ENCODE measurements at regions of chr6 and their contacts with region 1.

Region 1: DNA sequence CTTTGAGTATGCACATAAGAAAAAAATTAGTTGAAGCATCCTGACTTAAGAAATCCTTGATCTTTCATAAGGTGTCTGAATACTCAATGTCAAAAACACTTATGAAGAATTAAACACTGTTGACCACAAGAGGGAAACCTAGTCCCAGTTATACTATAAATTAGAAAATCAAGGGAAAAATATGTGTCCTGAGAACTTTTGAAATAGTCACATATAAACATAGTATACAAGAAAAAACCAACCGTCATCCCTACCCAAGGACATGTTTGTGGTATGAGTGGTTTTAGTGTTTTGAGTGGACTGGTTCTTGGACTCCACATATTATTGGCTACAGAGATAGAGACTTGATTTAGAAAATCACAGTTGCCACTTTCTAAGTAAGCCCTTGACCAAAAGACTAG is 7.6 kb upstream of the HLA-DRA start:
- DNase-seq: peak in 4 of 5 donors; percentile 28 to 41 (median 36)
- H3K4me3 ChIP-seq: no peak overlapping the region
- H3K4me3 Mint-ChIP-seq: no peak overlapping the region
- H3K27ac ChIP-seq: no peak overlapping the region
- H3K27ac Mint-ChIP-seq: no peak overlapping the region
- H3K4me1 ChIP-seq: no peaks in the 10 kb centered on the region
- H3K4me1 Mint-ChIP-seq: no peaks in the 10 kb centered on the region
- H3K27me3 ChIP-seq: peaks cover 4% of the 10 kb centered on the region
- H3K27me3 Mint-ChIP-seq: peaks cover 5 to 11% of the 10 kb centered on the region in 2 donors

Region 2: GRCh38 chr6:32290886-32291450 is 141.1 kb before region 1 on chr6:
- CTCF ChIA-PET with region 1: no interaction called
- POLR2A ChIA-PET with region 1: no interaction called
- intact Hi-C with region 1: no loop called
- DNase-seq: no peak
- H3K4me3 ChIP-seq: no peak overlapping the region
- H3K4me3 Mint-ChIP-seq: no peak overlapping the region
- H3K27ac ChIP-seq: no peak overlapping the region
- H3K27ac Mint-ChIP-seq: no peak overlapping the region
- H3K4me1 ChIP-seq: no peaks in the 10 kb centered on the region
- H3K4me1 Mint-ChIP-seq: no peaks in the 10 kb centered on the region
- H3K27me3 ChIP-seq: no peaks in the 10 kb centered on the region
- H3K27me3 Mint-ChIP-seq: peaks cover 28 to 33% of the 10 kb centered on the region in 2 donors

Region 3: DNA sequence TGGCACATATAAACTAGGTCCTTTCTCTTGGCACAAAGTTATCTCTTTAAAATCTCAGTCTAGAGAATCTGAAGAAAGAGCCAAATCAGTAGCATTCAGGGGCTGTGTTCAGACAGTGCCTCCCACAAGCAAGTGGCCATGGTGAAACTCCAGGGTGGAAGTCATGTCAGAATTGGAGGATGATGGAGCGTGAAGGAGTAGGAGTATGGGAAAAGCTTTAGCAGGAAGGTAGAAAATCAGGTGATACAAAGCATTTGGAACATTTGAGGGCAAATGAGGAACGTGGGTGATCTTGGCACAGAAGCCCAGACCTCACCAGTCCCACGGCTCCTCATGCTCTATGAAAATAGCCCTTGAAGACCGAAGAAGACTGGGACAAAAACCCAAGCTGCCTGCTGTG is 237.2 kb after region 1 on chr6:
- CTCF ChIA-PET with region 1: no interaction called
- POLR2A ChIA-PET with region 1: no interaction called
- intact Hi-C with region 1: no loop called
- DNase-seq: no peak
- H3K4me3 ChIP-seq: no peak overlapping the region
- H3K4me3 Mint-ChIP-seq: no peak overlapping the region
- H3K27ac ChIP-seq: no peak overlapping the region
- H3K27ac Mint-ChIP-seq: peak overlapping the region in 3 of 7 donors; percentile 12 to 78 (median 68)
- H3K4me1 ChIP-seq: peaks cover 30% of the 10 kb centered on the region
- H3K4me1 Mint-ChIP-seq: peaks cover 23 to 51% (median 39%) of the 10 kb centered on the region in 4 donors
- H3K27me3 ChIP-seq: no peaks in the 10 kb centered on the region
- H3K27me3 Mint-ChIP-seq: peaks cover 9 to 14% of the 10 kb centered on the region in 2 donors

Region 4: GRCh38 chr6:32692019-32692418 is 260.0 kb after region 1 on chr6:
- CTCF ChIA-PET with region 1: interaction called, 4 read pairs
- POLR2A ChIA-PET with region 1: no interaction called
- intact Hi-C with region 1: loop called (anchors 1 kb)
- DNase-seq: peak; percentile 39 to 72 (median 65)
- H3K4me3 ChIP-seq: no peak overlapping the region
- H3K4me3 Mint-ChIP-seq: no peak overlapping the region
- H3K27ac ChIP-seq: no peak overlapping the region
- H3K27ac Mint-ChIP-seq: no peak overlapping the region
- H3K4me1 ChIP-seq: peaks cover 16% of the 10 kb centered on the region
- H3K4me1 Mint-ChIP-seq: peaks cover 5 to 15% (median 11%) of the 10 kb centered on the region in 4 donors
- H3K27me3 ChIP-seq: no peaks in the 10 kb centered on the region
- H3K27me3 Mint-ChIP-seq: peaks cover 22 to 31% of the 10 kb centered on the region in 2 donors

Region 5: DNA sequence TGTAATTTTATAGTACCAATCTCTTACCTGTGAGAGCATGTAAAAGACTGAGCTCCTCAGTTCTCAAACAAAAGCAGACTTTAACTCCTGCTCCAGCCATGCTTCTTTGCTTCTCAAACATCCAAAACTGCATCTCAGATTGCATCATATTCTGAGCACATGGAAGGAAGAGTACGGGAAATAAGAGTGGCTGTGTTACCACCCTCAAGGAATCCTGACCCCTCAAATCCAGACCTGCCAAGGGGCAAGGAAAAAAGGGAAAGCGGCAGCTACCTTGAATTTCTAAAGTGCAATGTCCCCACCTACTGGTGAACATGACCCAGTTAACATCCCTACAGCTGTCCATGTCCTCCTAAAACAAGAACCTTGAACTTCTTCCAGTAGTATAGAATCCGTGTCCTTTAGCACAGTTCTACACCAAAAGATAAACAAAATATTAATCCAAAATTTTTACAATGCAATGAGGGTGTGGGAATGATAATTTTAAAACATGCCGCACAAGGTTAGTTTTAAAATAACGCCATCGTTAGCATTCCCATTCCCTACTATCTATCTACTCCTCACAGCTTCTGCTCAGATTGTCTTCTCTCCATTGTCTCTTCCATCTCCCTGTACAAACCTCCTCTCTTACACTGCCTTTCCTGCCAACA is 268.5 kb after region 1 on chr6:
- CTCF ChIA-PET with region 1: interaction called, 26 read pairs
- POLR2A ChIA-PET with region 1: no interaction called
- intact Hi-C with region 1: loop called (anchors 1 kb)
- DNase-seq: peak in 4 of 5 donors; percentile 29 to 45 (median 38)
- H3K4me3 ChIP-seq: no peak overlapping the region
- H3K4me3 Mint-ChIP-seq: peak overlapping the region in 2 of 8 donors; percentile 35 to 58
- H3K27ac ChIP-seq: no peak overlapping the region
- H3K27ac Mint-ChIP-seq: peak overlapping the region in 1 of 7 donors; percentile 90
- H3K4me1 ChIP-seq: no peaks in the 10 kb centered on the region
- H3K4me1 Mint-ChIP-seq: peaks cover 0 to 4% (median 1%) of the 10 kb centered on the region in 4 donors
- H3K27me3 ChIP-seq: peaks cover 9% of the 10 kb centered on the region
- H3K27me3 Mint-ChIP-seq: peaks cover 24 to 26% of the 10 kb centered on the region in 2 donors

Region 6: GRCh38 chr6:32785781-32786533 is 353.9 kb after region 1 on chr6:
- CTCF ChIA-PET with region 1: interaction called, 4 read pairs
- POLR2A ChIA-PET with region 1: no interaction called
- intact Hi-C with region 1: loop called (anchors 1 kb)
- DNase-seq: peak in 4 of 5 donors; percentile 34 to 47 (median 42)
- H3K4me3 ChIP-seq: no peak overlapping the region
- H3K4me3 Mint-ChIP-seq: no peak overlapping the region
- H3K27ac ChIP-seq: no peak overlapping the region
- H3K27ac Mint-ChIP-seq: peak overlapping the region in 1 of 7 donors; percentile 71
- H3K4me1 ChIP-seq: no peaks in the 10 kb centered on the region
- H3K4me1 Mint-ChIP-seq: no peaks in the 10 kb centered on the region
- H3K27me3 ChIP-seq: no peaks in the 10 kb centered on the region
- H3K27me3 Mint-ChIP-seq: peaks cover 25 to 26% of the 10 kb centered on the region in 2 donors

Region 7: GRCh38 chr6:32796848-32797776 is 365.1 kb after region 1 on chr6:
- CTCF ChIA-PET with region 1: interaction called, 4 read pairs
- POLR2A ChIA-PET with region 1: no interaction called
- intact Hi-C with region 1: loop called (anchors 1 kb)
- DNase-seq: peak; percentile 60 to 71 (median 65)
- H3K4me3 ChIP-seq: no peak overlapping the region
- H3K4me3 Mint-ChIP-seq: peak overlapping the region in 7 of 8 donors; percentile 33 to 79 (median 65)
- H3K27ac ChIP-seq: no peak overlapping the region
- H3K27ac Mint-ChIP-seq: no peak overlapping the region
- H3K4me1 ChIP-seq: peaks cover 9% of the 10 kb centered on the region
- H3K4me1 Mint-ChIP-seq: peaks cover 10 to 20% (median 13%) of the 10 kb centered on the region in 4 donors
- H3K27me3 ChIP-seq: peaks cover 23% of the 10 kb centered on the region
- H3K27me3 Mint-ChIP-seq: peaks cover 41 to 63% of the 10 kb centered on the region in 2 donors

Measured in CD4-positive, alpha-beta memory T cell (primary cell).